Mammary epithelial cell (primary cell): ENCODE measurements at regions of chr12 and their contacts with region 1.

Region 1: GRCh38 chr12:79373896-79374499 is 316.8 kb downstream of the PAWR start:
- DNase-seq: peak; percentile 15
- H3K4me3 ChIP-seq: no peak overlapping the region
- H3K27ac ChIP-seq: no peak overlapping the region
- H3K4me1 ChIP-seq: peaks cover 10% of the 10 kb centered on the region
- H3K27me3 ChIP-seq: no peaks in the 10 kb centered on the region
- CTCF ChIP-seq: peak; percentile 85 to 90

Region 2: GRCh38 chr12:78470354-78471195 is 903.4 kb before region 1 on chr12:
- CTCF ChIA-PET with region 1: no interaction called
- dilution Hi-C with region 1: no loop called
- in situ Hi-C with region 1: no loop called
- intact Hi-C with region 1: loop called (anchors 1 kb)
- DNase-seq: peak; percentile 32
- H3K4me3 ChIP-seq: no peak overlapping the region
- H3K27ac ChIP-seq: no peak overlapping the region
- H3K4me1 ChIP-seq: no peaks in the 10 kb centered on the region
- H3K27me3 ChIP-seq: no peaks in the 10 kb centered on the region
- CTCF ChIP-seq: peak; percentile 58 to 65

Region 3: GRCh38 chr12:78562368-78563205 is 811.4 kb before region 1 on chr12:
- CTCF ChIA-PET with region 1: interaction called, 5 read pairs
- dilution Hi-C with region 1: no loop called
- in situ Hi-C with region 1: no loop called
- intact Hi-C with region 1: loop called (anchors 10 kb)
- DNase-seq: peak; percentile 9
- H3K4me3 ChIP-seq: no peak overlapping the region
- H3K27ac ChIP-seq: no peak overlapping the region
- H3K4me1 ChIP-seq: no peaks in the 10 kb centered on the region
- H3K27me3 ChIP-seq: no peaks in the 10 kb centered on the region
- CTCF ChIP-seq: peak; percentile 39 to 57

Region 4: GRCh38 chr12:79566473-79567174 is 192.6 kb after region 1 on chr12:
- CTCF ChIA-PET with region 1: no interaction called
- dilution Hi-C with region 1: no loop called
- in situ Hi-C with region 1: no loop called
- intact Hi-C with region 1: no loop called
- DNase-seq: peak; percentile 24
- H3K4me3 ChIP-seq: no peak overlapping the region
- H3K27ac ChIP-seq: no peak overlapping the region
- H3K4me1 ChIP-seq: peaks cover 6% of the 10 kb centered on the region
- H3K27me3 ChIP-seq: no peaks in the 10 kb centered on the region
- CTCF ChIP-seq: no peak